Activated naive CD4-positive, alpha-beta T cell treated with anti-CD3 and anti-CD28 coated beads for 36 hours (primary cell): ENCODE measurements at regions of chr22 and their contacts with region 1.

Region 1: GRCh38 chr22:19909350-19910179 is 32.0 kb upstream of the COMT start:
- DNase-seq: peak; percentile 93
- H3K4me3 Mint-ChIP-seq: no peak overlapping the region
- H3K27ac Mint-ChIP-seq: peak overlapping the region; percentile 42
- H3K4me1 Mint-ChIP-seq: peaks cover 2% of the 10 kb centered on the region
- H3K27me3 Mint-ChIP-seq: no peaks in the 10 kb centered on the region

Region 2: DNA sequence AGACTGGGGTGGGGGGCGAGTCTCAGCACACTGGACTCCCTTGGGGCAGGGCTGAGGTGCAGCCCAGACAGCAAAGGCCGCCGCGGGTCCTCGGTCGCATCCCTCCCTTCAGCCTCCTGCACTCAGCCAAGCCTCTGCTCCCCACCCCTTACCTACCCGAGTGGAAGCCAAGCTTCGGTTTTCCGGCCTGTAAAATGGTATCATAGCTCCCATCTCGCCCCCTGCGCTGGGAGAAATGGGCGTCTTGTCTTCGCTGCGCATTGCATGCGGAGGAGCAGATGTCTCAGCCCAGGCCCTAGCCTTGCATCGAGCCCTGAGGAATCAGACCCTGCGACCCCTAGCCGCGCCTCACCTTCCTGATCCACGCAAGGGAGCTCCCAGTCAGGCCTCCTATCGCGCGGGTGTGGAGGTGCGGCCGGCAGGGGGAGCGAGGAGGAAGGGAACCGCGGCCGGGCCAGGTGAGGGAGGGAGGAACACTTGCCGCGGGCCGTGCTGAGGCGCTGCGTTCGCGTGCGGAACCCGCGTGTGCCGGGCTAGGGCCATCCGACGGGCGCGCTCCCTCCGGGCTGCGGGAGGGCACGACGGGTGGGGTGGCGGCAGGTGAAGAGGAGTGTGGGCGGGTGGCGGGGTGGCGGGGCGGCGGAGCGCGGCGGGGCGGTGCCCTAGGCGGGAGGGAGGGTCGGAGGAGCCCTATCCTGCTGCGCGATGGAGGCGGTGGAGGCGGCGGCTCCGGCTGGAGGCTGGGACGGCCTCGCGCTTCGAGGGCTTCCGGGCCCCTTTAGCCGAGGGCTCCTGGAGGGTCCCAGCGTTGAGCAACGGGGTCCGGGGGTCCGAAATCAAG is 153.1 kb before region 1 on chr22:
- CTCF ChIA-PET with region 1: interaction called, 9 read pairs
- intact Hi-C with region 1: loop called (anchors 1 kb)
- DNase-seq: peak; percentile 83
- H3K4me3 Mint-ChIP-seq: peak overlapping the region; percentile 9
- H3K27ac Mint-ChIP-seq: no peak overlapping the region
- H3K4me1 Mint-ChIP-seq: peaks cover 32% of the 10 kb centered on the region
- H3K27me3 Mint-ChIP-seq: peaks cover 46% of the 10 kb centered on the region